ENCODE measurements at regions of chr1 and their contacts with region 1.

Region 1: DNA sequence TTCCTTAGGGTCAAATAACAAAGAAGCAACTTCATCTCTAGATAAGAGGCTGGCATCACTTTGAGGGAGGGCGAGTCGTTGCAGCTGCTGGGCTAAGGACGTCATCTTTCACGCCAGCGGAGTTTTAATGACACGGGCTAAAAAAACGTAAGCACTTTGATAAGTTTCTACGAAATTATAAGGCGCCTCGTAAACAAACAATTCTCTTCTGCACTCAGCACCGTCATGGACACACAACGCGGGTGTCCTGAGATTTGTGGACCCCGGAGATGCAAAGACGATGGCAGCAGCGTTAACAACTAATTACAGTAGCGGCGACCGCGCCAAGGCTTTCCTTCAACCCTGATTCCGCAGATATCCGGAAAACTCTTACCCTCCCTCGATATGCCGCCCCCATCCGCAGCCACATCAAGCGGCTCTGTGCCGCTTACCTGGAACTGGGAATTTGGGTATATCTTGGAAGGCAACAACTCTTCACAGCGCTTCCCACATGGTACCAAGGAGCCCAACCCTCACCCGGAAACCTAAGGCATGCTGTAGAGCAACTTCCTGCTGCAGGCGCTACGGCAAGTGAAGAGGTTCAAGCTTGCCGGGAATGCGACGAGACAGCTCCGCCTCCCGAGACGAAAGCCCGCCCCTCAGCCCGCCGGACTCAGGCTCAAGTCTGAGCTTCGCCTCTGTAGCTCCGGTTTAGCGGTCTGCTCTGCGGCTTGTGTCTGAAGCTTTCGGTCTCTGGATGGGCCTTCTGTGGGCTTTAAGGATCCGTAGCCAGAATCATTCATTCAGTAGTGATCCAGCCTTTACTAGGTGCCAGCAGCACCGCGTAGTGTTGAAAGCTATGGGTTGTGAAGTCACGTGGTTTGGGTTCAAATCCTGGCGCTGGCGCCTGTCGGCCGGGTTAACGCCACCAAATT is at the start of gene HEATR1:
- H3K4me3 Mint-ChIP-seq: peak within 1 kb of the TSS; percentile 85
- H3K27ac Mint-ChIP-seq: peak within 1 kb of the TSS; percentile 86
- H3K4me1 Mint-ChIP-seq: peaks cover 12% of the 10 kb centered on the region
- H3K27me3 Mint-ChIP-seq: peaks cover 8% of the 10 kb centered on the region

Region 2: DNA sequence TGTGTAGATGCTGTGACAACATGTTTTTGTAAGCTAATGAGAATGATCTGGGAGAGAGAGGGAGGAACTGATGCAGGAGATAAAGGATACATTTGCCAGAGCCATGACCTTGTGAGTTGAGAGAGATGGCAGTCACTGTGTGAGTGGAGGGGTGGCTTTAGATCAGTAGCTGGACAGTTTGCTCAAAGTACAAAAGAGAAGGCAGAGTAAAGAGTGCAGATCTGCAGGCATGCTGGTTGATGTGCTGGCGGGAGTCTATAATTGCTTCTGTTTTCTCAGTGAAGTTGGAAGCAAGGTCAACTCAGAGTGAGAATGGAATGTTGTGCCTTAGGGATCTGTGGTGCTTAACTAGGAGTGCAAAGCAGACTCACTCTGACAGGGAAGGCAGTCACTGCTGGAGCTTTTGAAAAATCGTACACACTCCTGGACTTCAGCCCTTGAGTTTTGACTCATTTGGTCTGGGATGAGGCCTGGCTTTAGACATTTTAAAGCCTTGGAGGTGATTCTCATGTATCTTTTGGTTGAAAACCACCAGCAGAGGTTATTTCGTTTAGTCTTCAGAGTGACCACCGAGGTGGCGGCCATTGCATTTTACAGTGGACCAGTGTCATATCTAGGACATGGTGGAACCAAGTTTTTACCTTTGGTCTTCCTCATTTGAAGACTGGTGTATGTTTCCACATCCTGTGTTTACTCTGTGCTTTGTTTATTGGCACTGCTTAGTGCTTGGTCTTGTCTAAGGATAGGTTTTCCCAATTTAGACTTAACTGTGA is 240.4 kb after region 1 on chr1:
- intact Hi-C with region 1: no loop called
- H3K4me3 Mint-ChIP-seq: no peak overlapping the region
- H3K27ac Mint-ChIP-seq: no peak overlapping the region
- H3K4me1 Mint-ChIP-seq: peaks cover 14% of the 10 kb centered on the region
- H3K27me3 Mint-ChIP-seq: no peaks in the 10 kb centered on the region

Region 3: DNA sequence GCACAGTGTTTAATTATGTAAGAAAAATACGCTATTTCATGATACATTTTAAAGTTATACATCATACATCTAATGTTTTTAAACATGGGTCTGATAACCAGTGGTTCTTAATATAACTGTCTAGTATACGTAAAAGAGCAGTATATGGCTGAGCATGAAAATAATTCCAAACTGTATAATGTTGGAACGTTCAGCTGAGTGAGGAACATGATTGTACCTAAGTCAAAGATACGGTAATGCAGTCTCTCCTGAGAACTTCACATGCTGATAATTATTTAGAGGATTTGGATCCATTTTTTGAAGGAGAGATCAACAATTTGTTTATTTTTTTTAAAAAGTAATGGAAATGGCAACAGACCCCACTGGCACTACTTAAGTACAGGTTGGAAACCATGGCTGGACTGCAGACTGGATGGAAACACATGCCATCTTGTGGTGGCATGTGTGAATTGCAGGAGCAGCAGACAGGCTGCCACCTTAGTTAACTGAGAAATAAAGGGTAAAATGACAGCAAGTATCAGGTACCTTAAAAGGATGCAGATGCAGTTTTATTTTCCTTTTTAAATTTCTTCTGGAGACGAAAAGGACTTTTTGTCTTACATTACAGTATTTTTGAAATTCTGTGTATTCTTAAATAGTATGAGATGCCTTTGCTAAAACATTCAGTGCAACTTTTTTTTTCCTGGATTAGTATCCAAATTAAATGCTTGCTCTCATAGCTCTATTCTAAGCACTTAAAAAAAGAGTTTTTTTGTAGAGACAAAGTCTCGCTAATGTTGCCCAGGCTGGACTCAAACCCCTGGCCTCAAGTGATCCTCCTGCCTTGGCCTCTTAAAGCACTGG is 264.6 kb after region 1 on chr1:
- intact Hi-C with region 1: loop called (anchors 5 kb)
- H3K4me3 Mint-ChIP-seq: no peak overlapping the region
- H3K27ac Mint-ChIP-seq: peak overlapping the region; percentile 92
- H3K4me1 Mint-ChIP-seq: peaks cover 40% of the 10 kb centered on the region
- H3K27me3 Mint-ChIP-seq: no peaks in the 10 kb centered on the region

Region 4: DNA sequence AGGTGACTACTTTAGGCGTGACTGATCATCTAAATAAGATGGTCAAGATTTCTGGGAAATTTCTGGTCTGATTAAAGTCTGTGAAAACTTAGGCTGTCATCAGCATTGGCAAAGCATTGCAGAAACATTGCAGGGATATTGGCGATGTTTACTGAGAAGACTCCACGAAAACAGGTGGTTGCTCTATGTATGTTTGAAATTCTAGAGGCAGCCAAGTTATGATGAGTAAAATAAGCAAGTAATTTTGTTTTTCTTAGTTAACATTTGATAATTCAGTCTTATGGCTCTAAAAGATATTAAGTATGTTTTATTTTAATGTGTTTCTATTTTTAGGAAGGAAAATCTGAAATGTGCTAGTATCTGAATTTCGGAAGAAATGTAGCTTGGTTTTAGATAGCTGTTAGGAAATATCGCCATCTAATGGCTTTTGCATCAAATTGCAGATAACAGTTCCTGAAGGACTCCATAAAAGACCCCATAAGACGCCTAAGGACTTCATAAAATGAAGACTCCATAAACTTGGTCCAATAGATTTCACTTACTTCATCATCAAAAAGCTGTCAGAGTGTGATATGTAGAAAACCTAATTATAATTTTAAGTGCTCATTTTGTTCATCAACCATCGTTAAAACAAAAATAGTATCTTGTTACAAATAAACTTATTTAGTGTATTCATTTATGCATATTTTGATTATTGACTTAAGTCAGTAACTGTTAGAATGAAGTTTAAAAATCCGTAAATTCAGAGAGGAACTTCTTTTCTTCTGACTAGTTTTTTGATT is 782.3 kb after region 1 on chr1:
- intact Hi-C with region 1: loop called (anchors 2 kb)
- H3K4me3 Mint-ChIP-seq: no peak overlapping the region
- H3K27ac Mint-ChIP-seq: no peak overlapping the region
- H3K4me1 Mint-ChIP-seq: no peaks in the 10 kb centered on the region
- H3K27me3 Mint-ChIP-seq: no peaks in the 10 kb centered on the region